Thyroid gland (tissue), 4 donors: ENCODE measurements at regions of chr11 and their contacts with region 1.

Region 1: DNA sequence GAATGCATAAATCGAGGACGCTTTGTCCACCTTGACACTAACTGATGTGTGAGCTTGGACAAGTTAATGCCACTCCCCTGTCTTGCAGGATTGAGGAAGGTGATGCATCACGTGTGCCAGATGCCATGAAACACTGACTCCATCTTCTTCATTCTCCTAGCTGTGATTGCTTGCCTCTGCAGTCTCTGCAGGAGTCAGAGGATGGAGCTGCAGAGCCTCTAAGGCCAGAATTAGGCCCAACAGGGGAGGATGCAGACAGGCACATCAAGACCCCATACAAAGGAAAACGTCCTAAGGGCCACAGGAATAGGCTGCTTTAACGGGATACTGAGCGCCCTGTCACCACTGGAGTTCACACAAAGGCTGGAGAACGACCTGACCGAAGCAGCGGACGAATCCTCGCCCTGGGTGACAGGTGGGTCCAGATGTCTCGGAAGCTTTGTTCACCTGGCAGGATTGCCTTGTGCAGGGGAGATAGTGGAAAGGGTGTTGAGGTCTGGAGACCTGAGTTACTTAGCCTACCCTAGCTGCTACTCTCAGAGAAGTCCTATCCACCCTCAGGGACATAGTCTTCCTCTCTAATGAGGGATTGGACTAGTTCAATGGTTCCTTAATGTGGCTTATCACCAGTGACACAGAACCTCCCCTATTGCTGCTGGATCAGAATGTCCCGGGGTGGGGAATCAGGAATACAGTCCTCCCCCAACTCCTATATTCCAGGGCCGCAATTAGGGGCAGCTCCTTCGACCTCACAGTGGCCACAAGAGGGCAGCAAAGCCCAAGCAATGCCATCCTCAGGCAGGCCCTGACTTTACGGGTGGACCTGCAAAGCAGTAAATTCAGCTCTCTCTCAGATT is 32.4 kb downstream of the DBX1 start:
- DNase-seq: peak; percentile 78 to 86
- H3K4me3 ChIP-seq: no peak overlapping the region
- H3K27ac ChIP-seq: peak overlapping the region in 1 of 3 donors; percentile 89
- H3K4me1 ChIP-seq: peaks cover 10 to 17% of the 10 kb centered on the region in 2 donors
- H3K27me3 ChIP-seq: no peaks in the 10 kb centered on the region
- CTCF ChIP-seq: peak; percentile 56 to 90 (median 78)
- POLR2A ChIP-seq: no peak

Region 2: GRCh38 chr11:19071255-19071654 is 1056.6 kb before region 1 on chr11:
- intact Hi-C with region 1: loop called (anchors 10 kb)
- DNase-seq: peak; percentile 79 to 84
- H3K4me3 ChIP-seq: no peak overlapping the region
- H3K27ac ChIP-seq: no peak overlapping the region
- H3K4me1 ChIP-seq: peaks cover 3 to 9% of the 10 kb centered on the region in 2 donors
- H3K27me3 ChIP-seq: no peaks in the 10 kb centered on the region
- CTCF ChIP-seq: peak; percentile 62 to 100 (median 92)
- POLR2A ChIP-seq: no peak

Region 3: DNA sequence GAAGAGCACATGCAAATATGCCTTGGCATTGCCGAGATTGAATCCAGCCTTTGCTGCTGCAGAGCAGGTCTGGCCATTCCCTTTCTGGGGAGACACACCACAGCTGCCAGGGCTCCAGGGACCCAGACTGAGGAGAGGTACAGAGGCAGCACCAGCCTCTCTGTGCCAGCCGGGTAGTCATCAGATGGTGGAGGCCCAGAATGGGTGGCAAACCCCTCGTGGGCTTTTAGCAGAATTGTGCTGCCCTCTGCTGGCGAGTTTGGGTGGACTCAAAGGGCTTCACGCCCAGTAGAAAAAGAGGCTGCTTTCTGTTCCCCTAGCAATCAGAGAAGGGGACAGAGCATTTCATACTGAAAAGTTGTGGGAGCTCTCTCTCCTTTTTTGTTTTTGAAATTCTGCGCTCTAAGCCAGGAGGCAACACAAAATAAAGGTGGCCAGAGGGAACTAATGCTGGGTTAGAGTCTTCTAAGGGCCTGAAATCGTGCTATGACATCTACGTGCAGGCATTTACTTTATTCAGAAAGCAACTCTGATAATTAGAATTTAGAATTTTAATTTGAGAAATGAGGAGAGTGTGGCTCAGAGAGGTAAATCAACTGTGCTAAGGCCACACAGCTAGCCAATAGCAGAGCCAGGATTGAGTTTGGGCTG is 574.1 kb before region 1 on chr11:
- intact Hi-C with region 1: loop called (anchors 5 kb)
- DNase-seq: peak; percentile 84 to 89
- H3K4me3 ChIP-seq: no peak overlapping the region
- H3K27ac ChIP-seq: no peak overlapping the region
- H3K4me1 ChIP-seq: peaks cover 30 to 34% of the 10 kb centered on the region in 2 donors
- H3K27me3 ChIP-seq: no peaks in the 10 kb centered on the region
- CTCF ChIP-seq: peak; percentile 82 to 94 (median 90)
- POLR2A ChIP-seq: no peak

Region 4: GRCh38 chr11:19947537-19948114 is 180.3 kb before region 1 on chr11:
- intact Hi-C with region 1: loop called (anchors 5 kb)
- DNase-seq: no peak
- H3K4me3 ChIP-seq: no peak overlapping the region
- H3K27ac ChIP-seq: no peak overlapping the region
- H3K4me1 ChIP-seq: peaks cover 0 to 8% of the 10 kb centered on the region in 2 donors
- H3K27me3 ChIP-seq: no peaks in the 10 kb centered on the region
- CTCF ChIP-seq: no peak
- POLR2A ChIP-seq: no peak

Region 5: DNA sequence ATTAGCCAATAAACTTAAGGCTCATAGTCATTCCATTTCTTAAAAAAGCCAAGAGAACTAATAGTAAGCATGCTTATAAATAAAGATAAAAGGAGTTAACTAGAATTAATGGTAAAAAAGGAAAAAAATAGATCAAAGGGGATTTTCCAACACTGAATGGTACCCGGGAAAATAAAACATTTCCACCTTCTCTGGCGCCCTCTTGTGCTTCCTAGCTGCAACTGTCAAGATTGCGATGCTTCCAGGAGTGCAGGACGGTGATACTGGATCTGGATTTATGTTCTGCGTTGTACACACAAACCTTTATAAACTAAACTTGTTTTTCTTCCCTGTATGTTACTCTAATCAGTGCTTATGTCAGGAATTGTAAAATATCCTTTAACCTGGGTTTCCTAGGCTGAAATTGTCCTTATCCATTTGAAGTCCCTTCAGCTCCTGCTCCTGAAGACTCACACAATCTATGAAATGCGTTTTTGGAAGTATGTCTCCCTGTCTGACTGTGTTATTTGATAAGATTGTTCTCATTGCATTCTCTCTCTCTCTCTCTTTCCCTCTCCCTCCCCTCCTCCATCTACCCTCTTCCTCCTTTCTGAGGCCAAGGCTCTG is 226.0 kb after region 1 on chr11:
- intact Hi-C with region 1: loop called (anchors 5 kb)
- DNase-seq: peak; percentile 35 to 39
- H3K4me3 ChIP-seq: no peak overlapping the region
- H3K27ac ChIP-seq: no peak overlapping the region
- H3K4me1 ChIP-seq: no peaks in the 10 kb centered on the region
- H3K27me3 ChIP-seq: no peaks in the 10 kb centered on the region
- CTCF ChIP-seq: peak; percentile 37 to 89 (median 64)
- POLR2A ChIP-seq: no peak